ENCODE measurements at regions of chr12 and their contacts with region 1.

Region 1: GRCh38 chr12:12983420-12984035 is 16.5 kb downstream of the HEBP1 start:
- DNase-seq: peak in 1 of 5 donors; percentile 57
- H3K4me3 ChIP-seq: no peak overlapping the region
- H3K27ac ChIP-seq: no peak overlapping the region
- H3K4me1 ChIP-seq: peaks cover 8% of the 10 kb centered on the region
- H3K27me3 ChIP-seq: no peaks in the 10 kb centered on the region
- CTCF ChIP-seq: peak in 2 of 3 donors; percentile 63 to 68
- EP300 ChIP-seq: no peak
- POLR2A ChIP-seq: no peak

Region 2: GRCh38 chr12:12837025-12837872 is 146.3 kb before region 1 on chr12:
- intact Hi-C with region 1: loop called in 3 of 4 experiments (anchors 5 to 10 kb)
- DNase-seq: peak; percentile 47 to 71 (median 62)
- H3K4me3 ChIP-seq: no peak overlapping the region
- H3K27ac ChIP-seq: no peak overlapping the region
- H3K4me1 ChIP-seq: peaks cover 3% of the 10 kb centered on the region
- H3K27me3 ChIP-seq: no peaks in the 10 kb centered on the region
- CTCF ChIP-seq: peak; percentile 32 to 70 (median 61)
- EP300 ChIP-seq: no peak
- POLR2A ChIP-seq: no peak

Region 3: GRCh38 chr12:12916135-12916944 is 67.2 kb before region 1 on chr12:
- intact Hi-C with region 1: loop called (anchors 5 to 10 kb)
- DNase-seq: peak; percentile 81 to 92 (median 90)
- H3K4me3 ChIP-seq: no peak overlapping the region
- H3K27ac ChIP-seq: peak overlapping the region; percentile 45 to 49
- H3K4me1 ChIP-seq: peaks cover 13% of the 10 kb centered on the region
- H3K27me3 ChIP-seq: no peaks in the 10 kb centered on the region
- CTCF ChIP-seq: peak; percentile 92 to 98 (median 94)
- EP300 ChIP-seq: no peak
- POLR2A ChIP-seq: no peak

Region 4: DNA sequence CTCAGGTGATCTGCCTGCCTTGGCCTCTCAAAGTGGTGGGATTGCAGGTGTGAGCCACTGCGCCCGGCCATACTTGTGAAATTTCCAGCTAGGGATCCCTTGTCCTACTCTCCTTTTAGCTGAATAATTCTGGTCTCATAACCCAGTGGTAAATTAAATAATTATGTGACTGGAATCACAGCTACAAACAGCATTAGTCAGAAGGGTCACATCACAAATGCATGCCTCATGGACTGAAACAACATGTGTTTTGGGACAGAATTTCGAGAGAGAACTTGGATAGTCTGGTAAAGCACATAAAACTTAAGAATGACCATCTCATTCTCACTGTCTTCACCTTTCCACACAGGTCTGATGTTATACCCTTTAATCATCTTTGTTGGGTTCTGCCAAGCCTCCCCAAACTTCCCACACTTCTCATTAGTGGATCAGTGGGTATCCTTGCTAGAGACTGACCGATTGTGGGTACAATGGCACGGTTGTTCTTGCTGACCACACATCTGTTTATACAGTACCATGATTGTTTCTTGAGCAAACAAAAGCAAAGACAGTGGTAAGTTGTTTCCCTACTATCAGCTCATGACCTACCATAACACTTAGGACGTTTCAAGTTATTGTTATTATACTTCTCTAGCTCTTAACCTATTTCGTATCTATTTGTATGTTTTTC is 36.7 kb before region 1 on chr12:
- intact Hi-C with region 1: no loop called
- DNase-seq: no peak
- H3K4me3 ChIP-seq: no peak overlapping the region
- H3K27ac ChIP-seq: no peak overlapping the region
- H3K4me1 ChIP-seq: no peaks in the 10 kb centered on the region
- H3K27me3 ChIP-seq: no peaks in the 10 kb centered on the region
- CTCF ChIP-seq: no peak
- EP300 ChIP-seq: no peak
- POLR2A ChIP-seq: no peak

Measured in ovary (tissue), 10 donors.